ENCODE measurements at regions of chr7 and their contacts with region 1.

Region 1: GRCh38 chr7:71752171-71752935 is 620.4 kb downstream of the GALNT17 start:
- DNase-seq: peak; percentile 66 to 71
- H3K4me3 ChIP-seq: peak overlapping the region in 1 of 4 donors; percentile 23
- H3K27ac ChIP-seq: no peak overlapping the region
- H3K4me1 ChIP-seq: peaks cover 0 to 9% (median 4%) of the 10 kb centered on the region in 4 donors
- H3K27me3 ChIP-seq: peaks cover 5 to 34% (median 12%) of the 10 kb centered on the region in 3 donors
- CTCF ChIP-seq: peak in 5 of 7 experiments; percentile 36 to 62 (median 45)
- EP300 ChIP-seq: no peak
- POLR2A ChIP-seq: no peak

Region 2: GRCh38 chr7:71486856-71487628 is 265.3 kb before region 1 on chr7:
- intact Hi-C with region 1: no loop called
- DNase-seq: no peak
- H3K4me3 ChIP-seq: no peak overlapping the region
- H3K27ac ChIP-seq: peak overlapping the region in 2 of 5 donors; percentile 36 to 47
- H3K4me1 ChIP-seq: no peaks in the 10 kb centered on the region
- H3K27me3 ChIP-seq: no peaks in the 10 kb centered on the region
- CTCF ChIP-seq: no peak
- EP300 ChIP-seq: no peak
- POLR2A ChIP-seq: no peak

Region 3: DNA sequence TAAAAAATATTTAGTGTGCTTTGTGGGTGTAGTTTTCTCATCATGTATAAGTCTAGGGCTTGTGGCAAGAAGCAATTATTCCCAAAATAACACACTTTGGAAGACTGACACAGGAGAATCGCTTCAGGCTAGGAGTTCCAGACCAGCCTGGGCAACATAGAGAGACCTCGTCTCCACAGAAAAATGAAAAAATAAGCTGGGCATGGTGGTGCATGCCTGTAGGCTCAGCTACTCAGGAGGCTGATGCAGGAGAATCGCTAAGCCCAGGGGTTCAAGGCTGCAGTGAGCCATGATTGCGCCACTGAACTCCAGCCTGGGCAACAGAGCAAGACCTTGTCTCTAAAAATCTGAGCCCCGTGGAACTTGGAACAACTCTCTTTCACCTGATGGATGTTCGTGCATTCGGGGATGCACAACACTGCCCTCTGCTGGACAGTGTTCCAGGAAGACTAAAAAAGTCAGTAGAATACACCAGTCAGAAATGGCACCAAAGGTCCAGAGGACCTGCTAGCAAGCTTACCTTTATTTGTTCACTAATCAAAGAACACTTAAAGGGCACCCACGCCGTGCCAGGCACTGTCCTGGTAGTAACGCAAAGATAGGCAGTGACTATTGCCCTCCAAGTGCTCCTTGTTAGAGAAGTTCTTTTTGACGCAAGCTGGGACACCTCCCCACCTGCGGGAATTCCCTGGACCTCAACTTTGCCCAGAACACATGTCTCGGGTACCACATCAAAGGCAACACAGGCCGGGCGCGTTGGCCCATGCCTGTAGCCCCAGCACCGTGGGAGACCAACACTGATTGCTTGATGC is 741.7 kb after region 1 on chr7:
- intact Hi-C with region 1: loop called (anchors 10 kb)
- DNase-seq: peak; percentile 81 to 84
- H3K4me3 ChIP-seq: no peak overlapping the region
- H3K27ac ChIP-seq: no peak overlapping the region
- H3K4me1 ChIP-seq: no peaks in the 10 kb centered on the region
- H3K27me3 ChIP-seq: no peaks in the 10 kb centered on the region
- CTCF ChIP-seq: peak in 5 of 7 experiments; percentile 21 to 63 (median 52)
- EP300 ChIP-seq: no peak
- POLR2A ChIP-seq: no peak

Measured in stomach (tissue), 19 donors.